Activated naive CD4-positive, alpha-beta T cell treated with anti-CD3 and anti-CD28 coated beads for 36 hours (primary cell): ENCODE measurements at regions of chr10 and their contacts with region 1.

Region 1: GRCh38 chr10:110414563-110415309 is 83.0 kb upstream of the DUSP5 start:
- DNase-seq: peak; percentile 98
- H3K4me3 Mint-ChIP-seq: peak overlapping the region; percentile 41
- H3K27ac Mint-ChIP-seq: peak overlapping the region; percentile 84
- H3K4me1 Mint-ChIP-seq: peaks cover 73% of the 10 kb centered on the region
- H3K27me3 Mint-ChIP-seq: no peaks in the 10 kb centered on the region

Region 2: DNA sequence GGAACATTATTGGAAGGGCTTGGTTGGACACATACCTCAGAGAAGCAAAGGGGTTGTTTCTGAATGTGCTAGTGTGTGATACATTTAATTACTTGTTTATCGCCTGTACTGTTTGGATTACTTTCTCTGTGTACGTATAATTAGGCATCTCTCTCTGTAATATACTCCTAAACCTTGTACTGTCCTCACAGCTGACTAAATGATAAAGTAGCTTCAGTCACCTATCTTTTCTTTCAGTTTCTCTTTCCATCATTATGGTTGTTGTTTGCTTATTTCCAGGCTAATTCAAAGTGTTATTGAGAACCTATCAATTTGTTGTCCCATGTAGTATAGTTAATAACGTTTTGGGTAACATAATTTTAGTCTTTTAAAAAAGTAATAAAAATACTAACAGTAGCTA is 173.3 kb before region 1 on chr10:
- CTCF ChIA-PET with region 1: no interaction called
- intact Hi-C with region 1: no loop called
- DNase-seq: no peak
- H3K4me3 Mint-ChIP-seq: no peak overlapping the region
- H3K27ac Mint-ChIP-seq: no peak overlapping the region
- H3K4me1 Mint-ChIP-seq: peaks cover 33% of the 10 kb centered on the region
- H3K27me3 Mint-ChIP-seq: peaks cover 3% of the 10 kb centered on the region

Region 3: DNA sequence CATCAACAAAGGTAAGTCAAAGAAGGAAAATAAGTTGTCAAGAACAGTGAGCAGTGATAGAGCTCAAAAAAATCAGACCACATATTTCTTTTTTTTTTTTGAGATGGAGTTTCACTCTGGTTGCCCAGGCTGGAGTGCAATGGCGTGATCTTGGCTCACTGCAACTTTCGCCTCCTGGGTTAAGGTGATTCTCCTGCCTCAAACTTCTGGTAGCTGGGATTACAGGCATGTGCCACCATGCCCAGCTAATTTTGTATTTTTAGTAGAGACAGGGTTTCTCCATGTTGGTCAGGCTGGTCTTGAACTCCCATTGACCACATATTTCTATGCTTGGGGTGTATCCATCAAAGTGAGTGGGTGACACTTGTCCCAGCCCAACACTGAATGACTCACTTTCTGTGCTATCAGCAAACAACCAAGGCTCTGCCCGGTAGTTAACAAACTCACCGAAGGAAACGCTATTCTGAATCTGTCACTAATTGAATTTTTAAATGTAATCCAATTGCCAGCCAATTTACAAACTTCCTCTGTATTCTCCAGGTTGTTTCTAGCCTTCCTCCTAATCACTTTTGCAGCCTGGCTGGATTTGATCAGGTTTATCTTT is 90.4 kb before region 1 on chr10:
- CTCF ChIA-PET with region 1: no interaction called
- intact Hi-C with region 1: loop called (anchors 1 kb)
- DNase-seq: no peak
- H3K4me3 Mint-ChIP-seq: no peak overlapping the region
- H3K27ac Mint-ChIP-seq: peak overlapping the region; percentile 84
- H3K4me1 Mint-ChIP-seq: peaks cover 37% of the 10 kb centered on the region
- H3K27me3 Mint-ChIP-seq: peaks cover 2% of the 10 kb centered on the region

Region 4: DNA sequence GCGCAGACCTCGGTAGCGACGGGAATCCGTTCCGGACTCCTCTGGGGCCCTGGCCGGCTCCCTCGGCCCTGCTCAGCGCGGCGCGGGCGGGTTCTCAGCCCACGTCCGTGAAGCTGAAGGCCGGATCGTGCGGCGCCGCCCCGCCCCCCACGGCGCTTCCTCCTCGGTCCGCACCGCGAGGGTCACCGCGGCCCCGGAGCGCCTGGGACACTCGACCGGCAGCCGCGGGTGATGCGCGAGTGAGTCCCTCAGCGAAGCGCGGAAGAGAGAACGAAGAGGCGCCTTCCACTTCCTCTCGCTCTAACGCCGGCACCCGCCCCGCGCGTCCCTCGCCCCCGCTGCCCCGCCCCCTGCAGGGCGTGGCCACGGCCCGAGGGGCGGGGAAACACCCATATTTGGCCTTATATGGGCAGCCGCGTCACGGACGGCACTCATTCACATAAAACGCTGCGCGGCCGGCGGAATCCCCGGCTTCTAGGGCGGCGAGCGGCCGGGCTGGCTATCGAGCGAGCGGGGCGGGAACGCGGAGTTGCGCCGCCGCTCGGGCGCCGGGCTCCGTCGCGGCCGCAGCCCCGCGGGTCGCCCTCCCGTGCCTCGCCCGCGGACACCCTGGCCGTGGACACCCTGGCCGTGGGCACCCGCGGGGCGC is 82.8 kb after region 1 on chr10 and contains the start of gene DUSP5:
- CTCF ChIA-PET with region 1: interaction called, 4 read pairs
- intact Hi-C with region 1: loop called (anchors 1 kb)
- DNase-seq: peak; percentile 94
- H3K4me3 Mint-ChIP-seq: peak within 1 kb of the TSS; percentile 97
- H3K27ac Mint-ChIP-seq: peak within 1 kb of the TSS; percentile 94
- H3K4me1 Mint-ChIP-seq: peaks cover 43% of the 10 kb centered on the region
- H3K27me3 Mint-ChIP-seq: no peaks in the 10 kb centered on the region
- total RNA-seq, gene DUSP5: 51.0 to 53.5 TPM

Region 5: DNA sequence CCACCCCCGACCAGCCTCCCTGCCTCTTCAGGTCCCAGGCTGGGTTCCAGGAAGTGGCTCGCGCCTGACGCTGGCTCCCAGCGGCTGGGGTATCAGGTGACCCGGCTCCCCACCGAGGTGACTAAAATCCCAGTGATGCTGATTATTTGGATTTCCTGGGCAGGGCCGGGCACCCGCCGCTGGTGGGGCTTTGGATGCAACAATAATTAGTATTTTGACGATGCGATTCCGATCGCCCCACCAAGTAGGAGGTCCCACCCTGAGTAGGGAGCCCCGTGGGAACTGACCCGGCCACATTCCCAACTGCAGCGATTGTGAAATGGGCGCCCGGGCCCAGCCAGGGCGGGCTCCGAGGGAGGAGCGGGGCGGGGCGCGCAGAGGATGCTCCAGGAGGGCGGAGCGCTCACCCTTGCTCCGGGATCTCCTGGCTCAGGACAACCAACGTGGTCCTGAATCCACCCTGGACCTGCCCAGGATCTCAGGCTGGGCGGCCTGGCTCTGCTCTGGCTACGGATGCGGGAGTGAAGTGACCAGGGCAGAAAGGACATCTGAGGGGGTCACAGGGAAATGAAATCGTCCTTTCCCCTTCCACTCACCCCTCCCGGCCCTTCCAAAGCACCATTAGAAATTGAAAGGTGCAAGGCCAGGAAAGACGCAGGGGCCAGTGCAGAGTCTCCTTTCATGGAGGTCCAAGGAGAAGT is 115.5 kb after region 1 on chr10:
- CTCF ChIA-PET with region 1: no interaction called
- intact Hi-C with region 1: loop called (anchors 1 kb)
- DNase-seq: peak; percentile 52
- H3K4me3 Mint-ChIP-seq: no peak overlapping the region
- H3K27ac Mint-ChIP-seq: no peak overlapping the region
- H3K4me1 Mint-ChIP-seq: peaks cover 52% of the 10 kb centered on the region
- H3K27me3 Mint-ChIP-seq: no peaks in the 10 kb centered on the region